HepG2 (cell line): ENCODE measurements at regions of chr1 and their contacts with region 1.

Region 1: DNA sequence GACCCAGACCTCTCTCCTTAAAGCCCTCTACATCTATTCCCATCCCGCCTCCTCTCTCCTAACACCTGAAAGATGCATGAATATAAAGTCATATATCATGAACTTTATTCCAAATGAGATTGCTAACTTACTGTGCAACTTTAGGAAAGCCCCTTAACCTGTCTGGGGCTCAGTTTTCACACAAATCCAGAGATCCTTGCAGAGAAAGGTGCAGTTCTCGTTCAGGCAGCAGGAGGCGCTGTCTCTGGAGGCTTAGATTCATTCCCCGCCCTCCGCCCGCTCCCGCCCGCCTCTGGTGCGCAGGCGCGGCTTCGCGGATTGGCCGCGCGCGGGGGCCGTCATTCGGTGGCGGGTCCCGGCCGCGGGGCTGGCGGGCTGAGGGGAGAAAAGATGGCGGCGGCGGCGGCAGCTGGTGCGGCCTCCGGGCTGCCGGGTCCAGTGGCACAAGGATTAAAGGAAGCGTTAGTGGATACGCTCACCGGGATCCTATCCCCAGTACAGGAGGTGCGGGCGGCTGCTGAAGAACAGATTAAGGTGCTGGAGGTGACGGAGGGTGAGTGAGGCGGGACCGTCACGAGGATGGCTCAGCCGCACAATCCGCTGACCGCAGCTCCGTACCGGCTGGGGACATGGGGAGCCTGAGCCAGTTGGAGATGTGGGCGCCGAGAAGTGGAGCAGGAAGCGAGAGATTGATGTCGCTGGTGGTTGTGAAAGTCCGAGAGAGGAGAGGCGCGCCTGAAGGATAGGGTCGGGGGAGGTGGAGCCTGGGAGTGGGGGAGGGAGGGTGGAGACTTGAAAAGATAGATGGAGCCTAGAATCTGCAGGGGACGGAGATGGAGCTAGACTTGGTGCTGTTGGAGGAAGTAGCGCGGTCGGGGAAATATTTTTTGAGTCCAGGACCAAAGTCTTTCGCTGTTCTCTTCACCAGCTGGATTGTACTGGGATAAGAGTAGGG is at the start of gene IPO9:
- DNase-seq: peak; percentile 86
- ATAC-seq: peak; percentile 96
- H3K4me3 ChIP-seq: peak within 1 kb of the TSS; percentile 96 to 100 (median 100)
- H3K27ac ChIP-seq: peak within 1 kb of the TSS; percentile 92
- H3K4me1 ChIP-seq: peaks cover 49% of the 10 kb centered on the region
- H3K27me3 ChIP-seq: no peaks in the 10 kb centered on the region; a peak in 1 of 5 replicates
- CTCF ChIP-seq: peak; percentile 88
- EP300 ChIP-seq: no peak
- POLR2A ChIP-seq: peak; percentile 72 to 80
- RAD21 ChIP-seq: peak; percentile 40; the same call in 1 of the 2 replicates
- total RNA-seq, gene IPO9: 34.8 and 54.2 TPM in 2 replicates

Region 2: DNA sequence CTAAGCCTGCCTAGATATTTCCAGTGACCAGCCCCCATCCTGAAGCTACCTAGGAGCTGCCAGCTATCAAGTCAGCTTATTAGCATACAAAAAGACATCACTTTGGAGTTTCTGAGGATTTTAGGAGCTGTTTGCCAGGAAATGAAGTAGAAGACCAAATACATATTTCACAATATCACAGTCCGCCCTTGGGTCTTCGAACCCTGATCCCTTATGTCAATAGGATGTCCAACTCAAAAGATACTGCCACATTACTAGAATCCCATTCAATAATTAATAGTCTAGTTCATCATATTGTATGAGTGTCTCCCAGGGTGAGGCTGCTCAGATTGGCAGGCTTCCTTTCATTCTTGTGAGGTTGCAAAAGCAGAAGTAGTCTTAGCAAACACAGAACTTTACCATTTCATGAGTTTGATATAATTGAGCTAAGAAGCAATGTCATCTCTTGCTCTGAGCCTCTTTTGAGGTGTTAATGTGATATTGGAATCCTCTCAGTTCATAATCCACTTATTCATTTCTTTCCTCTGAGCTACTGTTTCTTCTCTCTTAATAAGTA is 13.5 kb after region 1 on chr1:
- CTCF ChIA-PET with region 1: no interaction called
- POLR2A ChIA-PET with region 1: interaction called, 10 read pairs
- in situ Hi-C with region 1: no loop called
- intact Hi-C with region 1: no loop called
- DNase-seq: peak; percentile 54
- ATAC-seq: peak; percentile 81
- H3K4me3 ChIP-seq: no peak overlapping the region
- H3K27ac ChIP-seq: peak overlapping the region; percentile 37
- H3K4me1 ChIP-seq: peaks cover 43% of the 10 kb centered on the region
- H3K27me3 ChIP-seq: no peaks in the 10 kb centered on the region
- CTCF ChIP-seq: no peak
- EP300 ChIP-seq: peak in 1 of 2 experiments; percentile 48; a peak in 1 of 4 replicates
- POLR2A ChIP-seq: no peak
- RAD21 ChIP-seq: no peak

Region 3: DNA sequence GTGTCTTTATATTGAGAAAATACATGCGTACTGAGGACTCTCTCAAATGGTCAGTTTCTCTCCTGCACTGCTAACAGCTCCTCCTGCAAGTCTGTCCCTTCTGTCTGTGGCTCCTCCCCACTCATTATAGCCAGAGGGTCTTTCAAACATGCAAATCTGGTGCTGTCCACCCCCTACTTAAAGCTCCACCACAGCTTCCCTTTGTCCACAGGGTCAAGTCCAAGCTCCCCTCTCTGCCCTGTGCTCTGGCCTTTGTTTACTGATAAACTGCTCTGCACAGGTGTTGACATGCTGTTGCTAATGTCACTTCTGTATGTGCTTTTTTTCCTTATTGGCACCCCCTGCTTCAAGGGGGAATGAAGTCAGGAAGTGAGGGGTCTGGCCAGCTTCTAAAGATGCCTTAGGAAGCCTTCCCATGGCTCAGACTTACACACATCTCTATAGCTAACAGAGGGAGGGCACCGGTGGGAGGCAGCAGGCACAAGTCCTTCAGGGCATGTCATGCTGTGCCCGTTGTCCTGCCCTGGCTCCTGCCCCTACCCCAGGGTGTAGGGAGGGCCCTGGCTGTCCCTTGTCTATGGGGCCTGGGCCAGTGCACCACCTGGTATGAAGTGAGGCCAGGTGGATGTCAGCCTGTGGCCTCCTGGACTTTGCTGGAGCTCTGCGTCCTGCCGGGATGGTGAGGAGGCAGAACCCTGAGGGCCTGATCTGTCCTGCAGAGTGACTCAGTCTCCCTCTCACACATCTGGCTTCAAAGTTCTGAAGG is 246.1 kb after region 1 on chr1:
- CTCF ChIA-PET with region 1: no interaction called
- POLR2A ChIA-PET with region 1: no interaction called
- in situ Hi-C with region 1: no loop called
- intact Hi-C with region 1: no loop called
- DNase-seq: peak; percentile 49
- ATAC-seq: peak; percentile 72
- H3K4me3 ChIP-seq: peak overlapping the region; percentile 5 to 58 (median 34)
- H3K27ac ChIP-seq: peak overlapping the region; percentile 1
- H3K4me1 ChIP-seq: peaks cover 57% of the 10 kb centered on the region
- H3K27me3 ChIP-seq: no peaks in the 10 kb centered on the region
- CTCF ChIP-seq: no peak
- EP300 ChIP-seq: no peak
- POLR2A ChIP-seq: peak in 1 of 2 experiments; percentile 42; a peak in 1 of 4 replicates
- RAD21 ChIP-seq: no peak